ENCODE measurements at regions of chr10 and their contacts with region 1.

Region 1: DNA sequence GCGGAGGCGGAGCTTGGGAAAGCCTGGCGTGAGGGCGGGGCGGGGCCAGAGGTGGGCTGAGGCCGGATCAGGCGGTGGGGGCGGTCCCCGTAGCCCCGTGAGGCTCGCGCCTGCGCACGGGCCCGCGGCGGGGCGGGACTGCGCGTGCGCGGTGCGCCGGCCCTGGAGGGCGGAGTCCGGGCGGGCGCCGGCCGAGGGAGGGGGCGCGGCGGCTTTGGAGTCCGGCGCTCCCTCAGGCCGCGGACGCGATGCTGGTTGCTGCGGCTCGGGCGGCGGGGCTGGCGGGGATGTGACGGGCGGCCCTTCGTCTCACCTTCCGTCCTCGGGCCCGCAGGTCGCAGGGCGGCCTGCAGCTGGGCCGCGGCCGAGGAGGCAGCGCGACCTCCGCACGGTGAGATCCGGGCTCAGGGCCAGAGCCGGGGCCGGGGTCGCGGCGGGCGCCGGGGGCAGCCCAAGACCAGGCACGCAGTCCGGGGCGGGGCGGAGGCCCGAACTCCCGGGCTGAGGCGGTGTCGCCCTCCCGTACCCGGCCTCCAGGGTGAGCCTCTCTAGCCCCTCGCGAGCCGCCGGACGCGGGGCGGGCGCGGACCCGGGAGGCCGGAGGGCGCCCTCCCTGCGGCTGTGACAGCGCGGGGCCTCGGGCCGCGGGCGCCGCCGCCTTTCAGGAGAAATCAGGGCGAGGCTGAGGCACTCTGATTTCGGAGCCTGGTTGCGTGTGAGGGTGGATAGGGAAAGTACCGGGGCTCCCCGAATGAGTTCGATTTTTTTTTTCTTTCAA is at the start of gene CCSER2:
- DNase-seq: peak; percentile 99
- H3K4me3 ChIP-seq: peak within 1 kb of the TSS; percentile 84
- H3K27ac ChIP-seq: peak within 1 kb of the TSS; percentile 99
- H3K4me1 ChIP-seq: no peaks in the 10 kb centered on the region
- H3K27me3 ChIP-seq: no peaks in the 10 kb centered on the region
- CTCF ChIP-seq: no peak
- total RNA-seq, gene CCSER2: 33.7 to 64.5 TPM

Region 2: GRCh38 chr10:84059523-84059922 is 269.1 kb before region 1 on chr10:
- intact Hi-C with region 1: no loop called
- DNase-seq: no peak
- H3K4me3 ChIP-seq: no peak overlapping the region
- H3K27ac ChIP-seq: no peak overlapping the region
- H3K4me1 ChIP-seq: no peaks in the 10 kb centered on the region
- H3K27me3 ChIP-seq: no peaks in the 10 kb centered on the region
- CTCF ChIP-seq: no peak

Region 3: GRCh38 chr10:84147347-84147746 is 181.3 kb before region 1 on chr10:
- intact Hi-C with region 1: loop called (anchors 5 kb)
- DNase-seq: no peak
- H3K4me3 ChIP-seq: no peak overlapping the region
- H3K27ac ChIP-seq: no peak overlapping the region
- H3K4me1 ChIP-seq: no peaks in the 10 kb centered on the region
- H3K27me3 ChIP-seq: no peaks in the 10 kb centered on the region
- CTCF ChIP-seq: no peak

Region 4: GRCh38 chr10:84194424-84195040 is 134.1 kb before region 1 on chr10 and contains the start of gene CDHR1:
- intact Hi-C with region 1: no loop called
- DNase-seq: peak; percentile 79
- H3K4me3 ChIP-seq: peak within 1 kb of the TSS; percentile 51
- H3K27ac ChIP-seq: peak within 1 kb of the TSS; percentile 77
- H3K4me1 ChIP-seq: peaks cover 17% of the 10 kb centered on the region
- H3K27me3 ChIP-seq: no peaks in the 10 kb centered on the region
- CTCF ChIP-seq: no peak
- total RNA-seq, gene CDHR1: 99.3 to 105 TPM

Region 5: GRCh38 chr10:84432891-84433290 is 104.3 kb after region 1 on chr10:
- intact Hi-C with region 1: no loop called
- DNase-seq: no peak
- H3K4me3 ChIP-seq: no peak overlapping the region
- H3K27ac ChIP-seq: no peak overlapping the region
- H3K4me1 ChIP-seq: peaks cover 9% of the 10 kb centered on the region
- H3K27me3 ChIP-seq: no peaks in the 10 kb centered on the region
- CTCF ChIP-seq: no peak

Measured in colonic mucosa (tissue), 4 donors.